ENCODE measurements at regions of chr15 and their contacts with region 1.

Region 1: DNA sequence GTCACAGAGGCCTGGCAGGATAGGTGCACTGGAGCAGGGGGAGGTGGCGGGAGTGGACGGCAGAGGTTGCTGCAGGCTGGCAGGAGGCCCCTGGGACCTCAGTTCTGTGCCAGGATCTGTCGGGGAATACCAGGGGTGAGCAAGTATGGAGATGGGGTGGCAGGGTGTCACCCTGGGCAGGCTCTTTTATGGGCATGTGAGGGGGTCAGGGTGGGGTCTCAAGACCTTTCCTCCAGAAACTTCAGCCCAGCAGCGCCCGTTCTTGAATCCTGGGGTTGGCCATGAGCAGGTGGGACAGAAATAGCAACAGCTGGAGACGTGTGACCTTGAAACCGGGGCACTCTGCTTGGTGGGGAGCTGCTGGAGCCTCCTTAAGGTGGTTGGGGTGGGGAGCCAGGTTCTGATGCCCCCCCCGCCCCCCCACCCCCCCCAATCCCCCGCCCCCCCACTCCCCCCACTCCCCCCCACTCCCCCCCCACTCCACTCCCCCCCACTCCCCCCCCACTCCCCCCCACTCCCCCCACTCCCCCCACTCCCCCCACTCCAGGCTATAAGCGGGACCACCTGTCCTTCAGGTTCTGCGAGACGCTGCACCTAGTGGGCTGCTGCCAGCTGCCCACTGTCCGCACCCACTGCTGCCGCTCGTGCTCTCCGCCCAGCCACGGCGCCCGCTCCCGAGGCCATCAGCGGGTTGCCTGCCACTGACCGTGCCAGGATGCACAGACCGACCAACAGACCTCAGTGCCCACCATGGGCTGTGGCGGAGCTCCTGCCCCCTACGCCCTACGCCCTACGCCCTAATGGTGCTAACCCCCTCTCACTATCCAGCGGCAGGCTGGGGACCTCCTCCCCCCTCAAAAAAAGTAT is 84.9 kb downstream of the TBC1D2B start:
- DNase-seq: no peak
- H3K4me3 ChIP-seq: no peak overlapping the region
- H3K27ac ChIP-seq: no peak overlapping the region
- H3K4me1 ChIP-seq: peaks cover 23% of the 10 kb centered on the region
- H3K27me3 ChIP-seq: no peaks in the 10 kb centered on the region
- CTCF ChIP-seq: no peak
- POLR2A ChIP-seq: no peak

Region 2: GRCh38 chr15:77915261-77915954 is 77.2 kb before region 1 on chr15:
- CTCF ChIA-PET with region 1: no interaction called
- POLR2A ChIA-PET with region 1: no interaction called
- dilution Hi-C with region 1: no loop called
- intact Hi-C with region 1: loop called (anchors 10 kb)
- DNase-seq: no peak
- H3K4me3 ChIP-seq: no peak overlapping the region
- H3K27ac ChIP-seq: no peak overlapping the region
- H3K4me1 ChIP-seq: no peaks in the 10 kb centered on the region
- H3K27me3 ChIP-seq: peaks cover 2 to 6% of the 10 kb centered on the region in 2 experiments
- CTCF ChIP-seq: no peak
- POLR2A ChIP-seq: no peak

Region 3: DNA sequence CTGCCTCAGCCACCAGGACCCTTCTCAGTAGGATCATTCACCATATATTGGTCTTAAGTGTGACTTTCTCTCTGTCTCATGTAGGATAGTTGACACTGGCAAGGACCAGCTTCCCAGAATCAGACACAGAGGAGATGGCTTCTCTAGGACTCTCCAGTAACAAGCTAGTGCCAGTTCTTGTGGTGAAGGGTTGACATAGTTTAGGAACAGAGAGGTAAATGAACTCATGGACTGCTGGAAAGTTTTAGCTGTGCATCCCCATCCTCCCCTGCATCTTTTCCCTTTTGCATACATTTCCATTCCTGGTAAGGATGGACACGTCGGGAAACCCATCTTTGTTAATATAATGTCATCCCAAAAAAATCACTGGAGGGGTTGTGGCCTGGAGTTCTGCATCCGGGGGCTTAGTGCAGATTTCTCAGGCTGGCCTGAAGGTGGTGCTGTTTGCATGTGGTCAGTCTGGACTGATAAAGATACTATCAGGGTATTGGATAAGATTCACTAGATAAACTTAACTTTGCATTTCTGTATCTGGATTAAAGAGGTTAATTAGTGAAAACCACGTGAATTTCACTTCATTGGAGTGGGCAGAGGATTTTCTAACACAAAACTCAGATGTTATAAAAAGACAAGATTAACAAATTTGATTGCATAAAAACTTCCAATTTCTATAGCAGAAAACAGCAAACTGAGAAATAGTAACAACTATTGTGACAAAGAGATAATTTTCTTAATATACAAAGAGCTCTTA is 25.9 kb before region 1 on chr15:
- CTCF ChIA-PET with region 1: interaction called, 15 read pairs
- POLR2A ChIA-PET with region 1: no interaction called
- dilution Hi-C with region 1: no loop called
- intact Hi-C with region 1: loop called (anchors 1 kb)
- DNase-seq: peak; percentile 34
- H3K4me3 ChIP-seq: no peak overlapping the region
- H3K27ac ChIP-seq: no peak overlapping the region
- H3K4me1 ChIP-seq: no peaks in the 10 kb centered on the region
- H3K27me3 ChIP-seq: peaks cover 0 to 1% of the 10 kb centered on the region in 2 experiments
- CTCF ChIP-seq: peak; percentile 78
- POLR2A ChIP-seq: no peak

Measured in endothelial cell of umbilical vein (primary cell).